Uterus (tissue), 4 donors: ENCODE measurements at regions of chr6 and their contacts with region 1.

Region 1: DNA sequence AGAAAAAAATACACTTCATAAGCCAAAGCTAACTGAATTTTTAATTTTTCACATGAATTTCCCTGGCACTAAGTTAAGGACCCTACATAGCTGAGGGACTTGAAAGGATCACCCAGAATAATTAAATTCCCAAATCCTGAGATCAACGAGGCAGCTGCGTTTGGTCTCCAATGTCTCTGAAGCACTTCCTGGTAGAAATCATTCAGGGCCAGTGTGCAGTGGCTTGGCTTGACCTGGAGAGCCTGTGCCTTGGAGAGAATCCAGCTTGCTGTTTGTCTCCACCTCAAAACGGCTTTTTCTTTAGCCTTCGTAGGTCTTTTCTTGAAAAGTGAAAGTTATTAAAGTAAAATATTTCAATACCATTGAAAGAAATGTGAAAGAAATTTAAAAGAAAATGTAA is 92.4 kb downstream of the SMOC2 start:
- DNase-seq: no peak
- H3K4me3 ChIP-seq: no peak overlapping the region
- H3K27ac ChIP-seq: peak overlapping the region; percentile 10 to 52
- H3K4me1 ChIP-seq: no peaks in the 10 kb centered on the region
- H3K27me3 ChIP-seq: no peaks in the 10 kb centered on the region
- CTCF ChIP-seq: no peak
- POLR2A ChIP-seq: no peak

Region 2: DNA sequence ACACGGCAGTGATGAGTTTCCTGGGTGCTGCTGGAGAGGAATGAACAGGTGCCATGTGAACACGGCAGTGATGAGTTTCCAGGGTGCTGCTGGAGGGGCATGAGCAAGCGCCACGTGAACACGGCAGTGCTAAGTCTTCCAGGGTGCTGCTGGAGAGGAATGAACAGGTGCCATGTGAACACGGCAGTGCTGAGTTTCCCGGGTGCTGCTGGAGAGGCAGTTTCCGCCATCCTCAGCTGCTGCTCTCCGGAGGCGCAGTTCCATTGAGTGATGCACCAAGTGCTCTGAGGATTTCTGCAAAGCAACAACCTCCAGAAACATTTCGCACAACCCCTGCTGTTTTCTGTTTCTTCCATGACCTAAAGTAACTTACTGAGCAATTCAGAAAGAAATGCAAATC is 62.9 kb after region 1 on chr6:
- intact Hi-C with region 1: loop called (anchors 10 kb)
- DNase-seq: no peak
- H3K4me3 ChIP-seq: no peak overlapping the region
- H3K27ac ChIP-seq: no peak overlapping the region
- H3K4me1 ChIP-seq: no peaks in the 10 kb centered on the region
- H3K27me3 ChIP-seq: no peaks in the 10 kb centered on the region
- CTCF ChIP-seq: no peak
- POLR2A ChIP-seq: no peak